Activated CD4-positive, alpha-beta memory T cell treated with anti-CD3 and anti-CD28 coated beads for 36 hours (primary cell): ENCODE measurements at regions of chr4 and their contacts with region 1.

Region 1: DNA sequence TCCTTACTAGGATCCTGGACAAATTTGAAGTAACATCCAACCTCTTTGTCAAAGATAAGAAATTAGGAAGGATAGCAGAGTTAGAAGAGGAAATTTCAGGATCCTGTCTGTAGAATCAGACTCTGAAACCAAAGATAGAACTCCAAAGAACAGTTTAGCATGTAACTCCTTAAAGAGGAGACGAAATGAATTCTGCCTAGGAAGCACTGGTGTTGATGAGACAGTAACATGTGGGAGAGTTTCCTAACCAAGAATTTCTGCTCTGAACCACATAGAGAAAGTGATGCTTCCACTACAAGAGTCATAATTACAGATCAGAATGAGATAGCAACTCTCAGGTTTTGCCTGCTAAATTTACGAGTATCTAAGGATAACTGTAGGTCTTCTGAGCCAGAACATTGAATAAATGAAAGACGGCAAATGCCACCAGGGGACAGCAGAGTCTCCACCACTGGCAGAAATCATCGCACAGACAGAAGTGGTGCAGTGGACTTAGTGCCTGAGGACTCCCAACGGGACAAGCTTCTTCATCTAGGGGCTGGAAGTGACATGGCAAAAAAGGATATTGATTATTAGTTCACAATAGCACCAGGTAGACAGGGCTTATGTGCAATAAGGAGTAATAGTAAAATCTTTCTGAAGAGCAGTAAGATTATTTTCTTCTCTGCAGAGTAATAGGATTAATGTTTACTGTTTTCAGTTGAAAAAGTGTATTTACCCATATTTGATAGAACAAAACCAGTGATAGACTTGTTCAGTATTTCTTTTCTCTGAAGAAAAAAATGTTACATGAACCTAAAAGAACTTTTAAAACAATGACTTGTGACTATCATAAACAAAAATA is 6.7 kb upstream of the PPID start:
- DNase-seq: peak; percentile 74
- H3K4me3 Mint-ChIP-seq: no peak overlapping the region
- H3K27ac Mint-ChIP-seq: no peak overlapping the region
- H3K4me1 Mint-ChIP-seq: peaks cover 32% of the 10 kb centered on the region
- H3K27me3 Mint-ChIP-seq: peaks cover 36% of the 10 kb centered on the region

Region 2: DNA sequence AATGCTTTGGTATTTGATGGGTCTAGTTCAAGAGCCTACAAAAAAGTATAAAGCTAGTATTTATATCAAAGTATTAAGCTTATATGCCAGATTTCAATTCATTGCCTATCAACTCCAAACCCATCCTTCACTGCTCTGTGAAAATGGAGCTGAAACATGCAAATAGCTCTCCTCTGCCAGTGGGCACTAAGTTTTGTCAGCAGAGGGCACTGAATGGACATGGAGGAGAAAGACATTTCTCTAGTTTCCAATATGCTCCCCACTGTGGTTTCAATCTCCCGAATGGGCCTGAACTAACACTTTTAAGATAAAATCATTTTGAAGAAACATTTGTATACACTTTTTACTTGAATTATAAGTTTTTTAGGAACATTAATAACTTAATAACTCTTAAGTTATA is 19.1 kb before region 1 on chr4:
- CTCF ChIA-PET with region 1: no interaction called
- POLR2A ChIA-PET with region 1: no interaction called
- intact Hi-C with region 1: no loop called
- DNase-seq: no peak
- H3K4me3 Mint-ChIP-seq: no peak overlapping the region
- H3K27ac Mint-ChIP-seq: no peak overlapping the region
- H3K4me1 Mint-ChIP-seq: no peaks in the 10 kb centered on the region
- H3K27me3 Mint-ChIP-seq: no peaks in the 10 kb centered on the region

Region 3: DNA sequence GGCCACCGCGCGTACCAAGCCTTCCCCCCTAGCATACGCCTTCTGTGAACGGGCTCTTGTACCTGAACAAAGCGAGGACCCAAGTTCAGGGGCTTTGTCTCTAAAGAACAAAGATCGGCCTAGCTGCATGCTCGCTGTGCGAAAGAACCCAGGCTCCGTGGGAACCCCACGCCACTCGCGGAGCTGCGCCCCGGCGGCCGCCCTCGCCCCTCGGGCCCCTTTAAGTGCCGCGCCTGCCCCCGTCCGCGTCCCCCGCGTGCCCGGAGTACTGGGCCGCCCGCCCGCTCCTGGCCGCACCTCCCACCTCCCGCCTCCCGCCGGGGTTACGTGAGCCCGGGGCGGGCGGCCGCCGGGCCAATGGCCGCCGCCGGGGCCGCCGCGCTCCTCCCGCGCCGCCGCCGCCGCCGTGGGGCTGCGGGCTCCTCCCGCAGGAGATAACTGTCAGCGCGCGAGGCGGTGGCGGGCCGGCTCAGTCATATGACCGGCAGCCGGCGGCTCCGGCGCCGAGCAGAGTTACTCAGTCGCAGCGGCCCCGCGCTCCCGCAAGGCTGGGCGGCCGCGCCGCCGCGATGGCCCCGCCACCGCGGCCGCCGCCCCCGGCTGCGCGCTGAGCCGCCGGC is 38.7 kb after region 1 on chr4 and contains the start of gene FNIP2:
- CTCF ChIA-PET with region 1: interaction called, 3 read pairs
- POLR2A ChIA-PET with region 1: no interaction called
- intact Hi-C with region 1: loop called (anchors 1 kb)
- DNase-seq: peak; percentile 73
- H3K4me3 Mint-ChIP-seq: peak within 1 kb of the TSS; percentile 100
- H3K27ac Mint-ChIP-seq: peak within 1 kb of the TSS; percentile 91
- H3K4me1 Mint-ChIP-seq: peaks cover 43% of the 10 kb centered on the region
- H3K27me3 Mint-ChIP-seq: peaks cover 2% of the 10 kb centered on the region
- total RNA-seq, gene FNIP2: 17.7 to 19.4 TPM

Region 4: GRCh38 chr4:158850800-158851644 is 121.1 kb after region 1 on chr4:
- CTCF ChIA-PET with region 1: interaction called, 14 read pairs
- POLR2A ChIA-PET with region 1: interaction called, 3 read pairs
- intact Hi-C with region 1: loop called (anchors 1 kb)
- DNase-seq: no peak
- H3K4me3 Mint-ChIP-seq: no peak overlapping the region
- H3K27ac Mint-ChIP-seq: no peak overlapping the region
- H3K4me1 Mint-ChIP-seq: peaks cover 18% of the 10 kb centered on the region
- H3K27me3 Mint-ChIP-seq: no peaks in the 10 kb centered on the region

Region 5: GRCh38 chr4:159175085-159175988 is 445.4 kb after region 1 on chr4:
- CTCF ChIA-PET with region 1: interaction called, 3 read pairs
- POLR2A ChIA-PET with region 1: no interaction called
- intact Hi-C with region 1: loop called (anchors 1 kb)
- DNase-seq: peak; percentile 69
- H3K4me3 Mint-ChIP-seq: no peak overlapping the region
- H3K27ac Mint-ChIP-seq: no peak overlapping the region
- H3K4me1 Mint-ChIP-seq: peaks cover 56% of the 10 kb centered on the region
- H3K27me3 Mint-ChIP-seq: no peaks in the 10 kb centered on the region

Region 6: GRCh38 chr4:159446266-159446976 is 716.5 kb after region 1 on chr4:
- CTCF ChIA-PET with region 1: no interaction called
- POLR2A ChIA-PET with region 1: no interaction called
- intact Hi-C with region 1: loop called (anchors 5 kb)
- DNase-seq: peak; percentile 28
- H3K4me3 Mint-ChIP-seq: no peak overlapping the region
- H3K27ac Mint-ChIP-seq: no peak overlapping the region
- H3K4me1 Mint-ChIP-seq: no peaks in the 10 kb centered on the region
- H3K27me3 Mint-ChIP-seq: peaks cover 9% of the 10 kb centered on the region